Dendritic cell treated with granulocyte-macrophage colony-stimulating factor and Interleukin-4, amounts not matched to agents 40 ng/mL and 50 ng/mL, for 4 days (primary cell): ENCODE measurements at regions of chr17 and their contacts with region 1.

Region 1: DNA sequence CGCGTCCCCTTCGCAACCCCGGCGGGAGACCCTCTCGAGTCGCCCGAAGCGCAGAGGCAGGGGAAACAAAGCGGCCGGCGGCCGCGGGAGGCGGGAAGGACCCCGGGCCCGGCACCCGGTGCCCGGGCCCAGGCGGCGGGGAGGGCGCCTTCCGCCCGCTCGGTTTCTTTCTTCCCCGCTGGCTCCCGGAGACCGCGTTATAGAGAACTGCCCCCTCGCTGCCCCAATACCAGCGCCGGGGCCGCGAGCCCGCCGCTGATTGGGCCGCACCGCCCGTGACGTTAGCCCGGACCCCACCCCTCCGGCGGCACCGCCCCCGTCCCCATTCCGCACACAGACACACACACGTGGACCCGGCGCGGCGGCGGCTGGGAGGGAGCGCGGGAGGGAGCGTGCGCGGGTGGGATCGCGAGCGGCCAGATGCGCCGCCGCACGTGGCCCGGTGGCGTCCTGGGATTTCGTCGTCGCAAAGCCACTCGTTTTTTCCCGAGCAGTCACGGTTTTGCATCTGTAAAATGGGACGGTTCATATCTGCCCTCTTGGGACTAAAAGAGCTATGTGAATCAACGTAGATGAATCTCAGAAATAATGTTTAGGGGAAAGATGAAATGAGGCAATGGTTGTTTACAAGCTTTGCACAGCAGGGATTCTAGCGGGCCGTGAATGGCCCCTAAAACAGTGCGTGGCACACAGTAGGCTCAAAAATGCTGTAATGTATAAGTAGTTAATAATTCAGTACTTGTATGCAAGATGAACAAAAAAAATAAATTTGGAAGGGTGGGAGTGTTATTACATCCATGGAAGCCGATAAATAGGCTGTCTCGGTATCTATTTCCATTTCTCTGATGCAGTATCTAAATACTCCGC is at the start of gene EPOP:
- H3K4me3 Mint-ChIP-seq: peak within 1 kb of the TSS; percentile 76
- H3K27ac Mint-ChIP-seq: peak within 1 kb of the TSS; percentile 68
- H3K4me1 Mint-ChIP-seq: peaks cover 76% of the 10 kb centered on the region
- H3K27me3 Mint-ChIP-seq: peaks cover 39% of the 10 kb centered on the region

Region 2: DNA sequence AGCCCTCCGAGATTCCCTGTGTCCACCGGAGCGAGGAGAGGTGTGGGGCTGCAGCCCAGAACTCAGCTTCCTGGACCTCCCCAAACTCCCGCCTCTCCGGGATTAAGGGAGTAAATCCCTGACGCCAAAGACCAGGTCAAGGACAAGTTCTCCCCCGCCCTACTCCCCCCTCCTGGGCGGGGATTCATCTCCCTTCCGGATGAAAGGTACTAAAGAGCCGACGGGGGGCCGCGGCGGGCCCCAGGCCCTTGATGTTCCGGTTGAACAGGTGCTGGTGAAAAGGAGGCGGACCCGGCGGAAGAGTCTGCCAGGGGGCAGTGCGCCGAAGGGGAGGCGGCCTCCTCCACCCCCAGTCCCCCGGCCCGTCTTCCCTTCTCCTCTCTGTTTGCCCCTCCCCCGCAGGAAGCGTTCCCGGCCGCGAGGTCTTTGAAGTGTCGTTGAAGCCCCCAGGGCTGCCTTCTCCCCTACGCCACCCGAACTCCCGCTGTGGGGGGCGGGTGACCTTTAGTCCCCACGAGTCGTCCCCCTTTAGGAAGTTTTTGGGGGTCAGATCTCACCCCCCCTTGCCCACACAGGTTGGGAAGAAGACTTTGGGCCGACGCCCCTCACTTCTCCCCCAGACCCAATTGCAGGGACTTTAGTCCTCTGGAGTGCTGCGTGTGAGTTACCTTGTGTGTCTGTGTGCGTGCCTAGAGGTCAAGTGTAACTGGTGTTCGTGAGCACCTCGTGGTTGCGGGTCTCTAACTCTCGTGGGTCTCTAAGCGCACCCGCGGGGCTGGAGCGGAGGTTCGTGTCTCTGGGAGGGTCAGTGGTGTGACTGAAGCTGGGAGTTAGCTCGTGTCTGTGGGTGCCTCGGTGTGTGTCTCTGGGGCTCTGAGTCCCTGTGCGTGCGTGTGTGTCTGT is 29.0 kb after region 1 on chr17:
- intact Hi-C with region 1: loop called (anchors 1 kb)
- H3K4me3 Mint-ChIP-seq: peak overlapping the region; percentile 97
- H3K27ac Mint-ChIP-seq: peak overlapping the region; percentile 100
- H3K4me1 Mint-ChIP-seq: peaks cover 54% of the 10 kb centered on the region
- H3K27me3 Mint-ChIP-seq: no peaks in the 10 kb centered on the region

Region 3: GRCh38 chr17:38715216-38715943 is 40.4 kb after region 1 on chr17:
- intact Hi-C with region 1: no loop called
- H3K4me3 Mint-ChIP-seq: no peak overlapping the region
- H3K27ac Mint-ChIP-seq: no peak overlapping the region
- H3K4me1 Mint-ChIP-seq: peaks cover 46% of the 10 kb centered on the region
- H3K27me3 Mint-ChIP-seq: no peaks in the 10 kb centered on the region

Region 4: DNA sequence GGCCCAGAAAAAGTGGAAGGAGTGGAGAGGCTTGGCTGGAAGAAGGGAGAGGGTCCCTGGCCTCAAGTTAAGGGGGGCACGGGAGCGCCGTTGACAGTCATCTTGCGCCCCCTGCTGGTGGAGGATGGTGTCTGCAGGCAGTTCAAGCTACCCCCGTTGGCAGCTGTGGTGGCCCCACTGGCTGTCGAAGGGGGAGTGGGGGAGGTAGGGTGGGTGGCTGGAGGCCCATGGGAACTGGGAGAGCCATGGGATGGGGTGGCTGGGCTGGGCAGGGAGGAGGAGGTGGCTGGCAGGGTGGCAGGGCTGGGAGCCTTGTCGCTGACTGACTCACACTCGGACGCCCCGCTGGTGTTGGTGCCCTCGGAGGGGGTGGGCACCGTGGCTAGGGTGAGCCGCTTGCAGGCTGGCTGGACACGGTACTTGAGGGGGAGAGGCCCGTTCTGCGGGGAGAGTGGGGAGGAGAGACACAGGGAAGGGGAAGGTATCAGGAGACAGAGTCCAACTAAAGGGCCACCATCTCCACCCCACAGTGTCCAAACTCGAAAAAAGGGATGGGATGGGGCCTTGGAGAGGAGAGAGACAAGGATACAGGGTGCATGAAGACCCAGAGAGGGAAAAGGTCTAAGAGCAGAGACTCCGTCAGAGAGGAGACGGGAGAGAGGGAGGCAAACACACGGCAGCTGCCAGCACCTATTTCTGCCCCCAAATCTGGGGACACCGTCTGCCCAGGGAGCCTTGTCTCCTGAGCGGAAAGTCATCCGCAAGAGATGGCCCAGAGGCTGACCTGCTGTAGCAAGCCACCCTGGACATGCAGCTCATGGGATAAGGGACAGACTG is 60.4 kb after region 1 on chr17:
- intact Hi-C with region 1: loop called (anchors 1 kb)
- H3K4me3 Mint-ChIP-seq: no peak overlapping the region
- H3K27ac Mint-ChIP-seq: peak overlapping the region; percentile 18
- H3K4me1 Mint-ChIP-seq: peaks cover 48% of the 10 kb centered on the region
- H3K27me3 Mint-ChIP-seq: peaks cover 34% of the 10 kb centered on the region